CD8-positive, alpha-beta T cell (primary cell): ENCODE measurements at regions of chr7 and their contacts with region 1.

Region 1: GRCh38 chr7:19708397-19709248 is at the start of gene POLR1F:
- DNase-seq: peak; percentile 88 to 97 (median 93)
- ATAC-seq: peak; percentile 95
- H3K4me3 ChIP-seq: peak within 1 kb of the TSS; percentile 86 to 88
- H3K4me3 Mint-ChIP-seq: peak within 1 kb of the TSS; percentile 99
- H3K27ac ChIP-seq: peak within 1 kb of the TSS; percentile 82 to 90
- H3K27ac Mint-ChIP-seq: peak within 1 kb of the TSS; percentile 97
- H3K4me1 ChIP-seq: peaks cover 31% of the 10 kb centered on the region
- H3K4me1 Mint-ChIP-seq: peaks cover 56% of the 10 kb centered on the region
- H3K27me3 ChIP-seq: no peaks in the 10 kb centered on the region
- H3K27me3 Mint-ChIP-seq: no peaks in the 10 kb centered on the region
- CTCF ChIP-seq: peak; percentile 73
- total RNA-seq, gene POLR1F: 35.0 to 37.7 TPM

Region 2: GRCh38 chr7:19698331-19698730 is 10.3 kb before region 1 on chr7:
- CTCF ChIA-PET with region 1: interaction called, 24 read pairs
- POLR2A ChIA-PET with region 1: interaction called, 5 read pairs
- intact Hi-C with region 1: no loop called
- DNase-seq: no peak
- ATAC-seq: no peak
- H3K4me3 ChIP-seq: no peak overlapping the region
- H3K4me3 Mint-ChIP-seq: no peak overlapping the region
- H3K27ac ChIP-seq: no peak overlapping the region
- H3K27ac Mint-ChIP-seq: no peak overlapping the region
- H3K4me1 ChIP-seq: no peaks in the 10 kb centered on the region
- H3K4me1 Mint-ChIP-seq: peaks cover 5% of the 10 kb centered on the region
- H3K27me3 ChIP-seq: no peaks in the 10 kb centered on the region
- H3K27me3 Mint-ChIP-seq: no peaks in the 10 kb centered on the region
- CTCF ChIP-seq: no peak

Region 3: GRCh38 chr7:20598459-20599309 is 890.1 kb after region 1 on chr7:
- CTCF ChIA-PET with region 1: interaction called, 57 read pairs
- POLR2A ChIA-PET with region 1: interaction called, 4 read pairs
- intact Hi-C with region 1: loop called (anchors 1 kb)
- DNase-seq: peak in 2 of 9 experiments; percentile 49 to 65
- ATAC-seq: peak; percentile 57
- H3K4me3 ChIP-seq: no peak overlapping the region
- H3K4me3 Mint-ChIP-seq: no peak overlapping the region
- H3K27ac ChIP-seq: no peak overlapping the region
- H3K27ac Mint-ChIP-seq: no peak overlapping the region
- H3K4me1 ChIP-seq: no peaks in the 10 kb centered on the region
- H3K4me1 Mint-ChIP-seq: peaks cover 3% of the 10 kb centered on the region
- H3K27me3 ChIP-seq: no peaks in the 10 kb centered on the region
- H3K27me3 Mint-ChIP-seq: peaks cover 14% of the 10 kb centered on the region
- CTCF ChIP-seq: peak; percentile 64